Dorsolateral prefrontal cortex (tissue), 120 donors: ENCODE measurements at regions of chr4 and their contacts with region 1.

Region 1: DNA sequence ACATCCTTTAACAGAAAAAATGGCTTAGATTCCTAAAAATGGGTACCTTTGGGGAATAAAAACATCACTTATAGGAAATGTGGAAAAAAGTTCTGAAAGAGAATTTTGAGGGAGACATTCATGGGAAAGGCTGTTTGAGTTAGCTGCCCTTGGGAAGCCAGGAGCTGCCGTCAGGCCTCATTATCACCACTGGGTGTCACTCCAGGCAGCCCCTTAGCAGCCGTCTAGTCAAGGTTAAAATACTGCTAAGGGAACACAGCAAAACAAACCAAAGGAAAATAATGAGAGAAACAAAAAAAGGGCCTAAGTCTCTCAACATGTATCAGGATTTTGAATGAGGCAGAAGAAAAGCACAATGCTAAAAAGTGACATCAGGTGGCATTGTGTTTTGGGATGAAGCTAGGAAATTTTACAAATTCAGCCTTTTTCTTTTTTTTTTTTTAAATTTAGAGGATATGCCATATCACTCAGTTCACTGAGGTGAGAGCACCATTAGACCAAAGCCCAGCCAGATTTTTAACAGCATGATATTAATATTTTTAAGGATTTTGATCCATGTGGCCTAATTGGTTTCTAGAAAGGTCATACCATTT is 235.3 kb downstream of the GPAT3 start:
- DNase-seq: peak in 3 of 10 donors; percentile 16 to 45 (median 34)
- H3K4me3 ChIP-seq: no peak overlapping the region
- H3K27ac ChIP-seq: no peak overlapping the region
- H3K27me3 ChIP-seq: peaks cover 0 to 10% (median 0%) of the 10 kb centered on the region in 45 donors
- CTCF ChIP-seq: peak in 49 of 56 donors; percentile 15 to 71 (median 42)

Region 2: DNA sequence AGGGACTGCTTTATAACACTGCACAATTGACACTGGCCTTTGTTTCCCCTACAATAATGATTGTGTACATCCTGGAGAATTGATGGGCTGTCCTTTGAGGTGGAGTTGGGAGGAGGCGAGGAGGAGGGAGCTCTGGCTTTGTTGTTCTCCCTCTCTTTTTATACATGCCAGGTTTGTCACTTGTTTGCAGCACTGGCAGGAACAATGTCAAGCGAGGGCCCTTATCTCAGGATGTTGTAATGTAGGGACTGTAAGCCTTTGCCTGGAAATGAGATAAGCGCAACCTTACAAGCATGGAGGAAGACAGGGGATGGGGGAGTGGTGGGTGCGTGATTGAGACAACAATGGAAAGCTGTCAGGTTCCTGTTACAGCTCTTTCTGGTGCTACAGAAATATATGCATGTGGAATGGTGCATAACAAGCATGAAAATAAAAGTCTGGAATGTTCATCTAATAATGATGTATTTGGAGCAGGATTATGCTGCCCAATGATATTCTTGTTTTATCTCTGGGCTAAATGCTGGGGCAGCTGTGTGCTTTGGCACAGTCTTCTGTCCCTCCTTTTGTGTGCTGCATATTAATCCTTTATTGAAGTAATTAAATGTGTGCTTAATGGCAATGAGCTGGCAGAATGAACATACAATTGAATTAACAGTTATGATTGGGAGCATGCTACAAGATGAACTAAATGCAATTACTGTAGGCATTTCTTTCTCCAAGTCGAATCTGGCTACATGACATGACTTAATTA is 59.1 kb after region 1 on chr4:
- intact Hi-C with region 1: no loop called
- DNase-seq: no peak
- H3K4me3 ChIP-seq: no peak overlapping the region
- H3K27ac ChIP-seq: no peak overlapping the region
- H3K27me3 ChIP-seq: peaks cover 0 to 3% (median 0%) of the 10 kb centered on the region in 45 donors
- CTCF ChIP-seq: no peak

Region 3: GRCh38 chr4:84503495-84504437 is 732.6 kb after region 1 on chr4:
- intact Hi-C with region 1: loop called in 1 of 2 experiments (anchors 10 kb)
- DNase-seq: no peak
- H3K4me3 ChIP-seq: no peak overlapping the region
- H3K27ac ChIP-seq: no peak overlapping the region
- H3K27me3 ChIP-seq: peaks cover 38 to 100% (median 98%) of the 10 kb centered on the region in 45 donors
- CTCF ChIP-seq: peak in 55 of 56 donors; percentile 24 to 84 (median 67)